ENCODE measurements at regions of chr22 and their contacts with region 1.

Region 1: DNA sequence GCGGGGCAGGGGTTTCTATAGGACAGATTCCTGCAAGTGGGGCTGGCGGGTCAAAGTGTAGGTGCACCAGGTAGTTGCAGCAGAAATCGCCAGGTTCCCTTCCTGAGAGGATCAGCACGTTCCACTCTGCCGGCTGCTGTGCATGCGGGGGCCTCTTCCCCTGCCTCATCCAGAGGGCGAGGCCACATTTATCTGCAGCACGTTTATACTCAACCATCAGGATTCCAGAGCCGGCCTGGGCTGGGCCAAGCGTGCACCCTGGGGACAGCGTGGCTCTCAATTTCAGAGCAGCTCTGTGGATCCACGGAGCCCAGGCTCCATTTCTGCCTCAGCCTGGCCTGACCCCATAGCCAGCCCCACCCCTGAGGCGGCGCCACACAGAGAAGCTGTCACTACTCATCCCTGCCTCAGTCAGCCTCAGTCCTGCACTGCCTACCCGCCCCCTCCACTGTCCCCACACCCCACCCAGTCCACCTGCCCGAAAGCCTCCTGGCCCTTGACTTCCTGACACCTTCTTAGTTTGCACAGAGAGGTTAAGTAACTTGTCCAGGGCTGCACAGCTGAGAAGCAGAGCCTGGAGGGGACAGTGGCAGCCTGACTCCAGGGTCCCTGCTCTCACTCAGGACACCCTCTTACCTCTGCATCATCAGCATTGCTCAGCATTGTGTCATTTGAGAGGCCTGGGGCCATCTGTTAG is 45.9 kb upstream of the RTL6 start:
- DNase-seq: no peak
- H3K4me3 Mint-ChIP-seq: no peak overlapping the region
- H3K27ac Mint-ChIP-seq: no peak overlapping the region
- H3K4me1 Mint-ChIP-seq: no peaks in the 10 kb centered on the region
- H3K27me3 Mint-ChIP-seq: peaks cover 20% of the 10 kb centered on the region

Region 2: GRCh38 chr22:44261861-44262595 is 281.9 kb before region 1 on chr22:
- CTCF ChIA-PET with region 1: no interaction called
- intact Hi-C with region 1: no loop called
- DNase-seq: no peak
- H3K4me3 Mint-ChIP-seq: no peak overlapping the region
- H3K27ac Mint-ChIP-seq: no peak overlapping the region
- H3K4me1 Mint-ChIP-seq: peaks cover 4% of the 10 kb centered on the region
- H3K27me3 Mint-ChIP-seq: no peaks in the 10 kb centered on the region

Region 3: DNA sequence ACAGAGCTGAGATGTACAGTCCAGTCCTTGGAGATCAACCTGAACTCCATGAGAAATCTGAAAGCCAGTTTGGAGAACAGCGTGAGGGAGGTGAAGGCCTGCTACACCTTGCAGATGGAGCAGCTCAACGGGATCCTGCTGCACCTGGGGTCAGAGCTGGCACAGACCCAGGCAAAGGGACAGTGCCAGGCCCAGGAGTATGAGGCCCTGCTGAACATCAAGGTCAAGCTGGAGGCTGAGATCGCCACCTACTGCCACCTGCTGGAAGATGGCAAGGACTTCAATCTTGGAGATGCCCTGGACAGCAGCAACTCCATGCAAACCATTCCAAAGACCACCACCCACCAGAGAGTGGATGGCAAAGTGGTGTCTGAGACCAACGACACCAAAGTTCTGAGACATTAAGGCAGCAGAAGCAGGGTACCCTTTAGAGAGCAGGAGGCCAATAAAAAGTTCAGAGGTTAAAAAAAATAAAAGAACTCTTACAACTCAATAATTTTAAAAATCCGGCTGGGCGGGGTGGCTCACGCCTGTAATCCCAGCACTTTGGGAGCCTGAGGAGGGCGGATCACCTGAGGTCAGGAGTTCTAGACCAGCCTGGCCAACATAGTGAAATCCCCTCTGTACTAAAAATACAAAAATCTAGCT is 24.0 kb after region 1 on chr22:
- CTCF ChIA-PET with region 1: interaction called, 11 read pairs
- intact Hi-C with region 1: no loop called
- DNase-seq: peak; percentile 71
- H3K4me3 Mint-ChIP-seq: no peak overlapping the region
- H3K27ac Mint-ChIP-seq: no peak overlapping the region
- H3K4me1 Mint-ChIP-seq: no peaks in the 10 kb centered on the region
- H3K27me3 Mint-ChIP-seq: peaks cover 5% of the 10 kb centered on the region